ENCODE measurements at regions of chr1 and their contacts with region 1.

Region 1: GRCh38 chr1:181142096-181142958 is 53.8 kb downstream of the IER5 start:
- DNase-seq: peak; percentile 81
- H3K4me3 ChIP-seq: peak overlapping the region; percentile 36
- H3K27ac ChIP-seq: peak overlapping the region; percentile 43
- H3K27me3 ChIP-seq: peaks cover 6% of the 10 kb centered on the region
- CTCF ChIP-seq: peak; percentile 97

Region 2: GRCh38 chr1:180881806-180882509 is 260.4 kb before region 1 on chr1:
- CTCF ChIA-PET with region 1: interaction called, 55 read pairs
- POLR2A ChIA-PET with region 1: no interaction called
- DNase-seq: no peak
- H3K4me3 ChIP-seq: no peak overlapping the region
- H3K27ac ChIP-seq: no peak overlapping the region
- H3K27me3 ChIP-seq: no peaks in the 10 kb centered on the region
- CTCF ChIP-seq: peak; percentile 60

Region 3: DNA sequence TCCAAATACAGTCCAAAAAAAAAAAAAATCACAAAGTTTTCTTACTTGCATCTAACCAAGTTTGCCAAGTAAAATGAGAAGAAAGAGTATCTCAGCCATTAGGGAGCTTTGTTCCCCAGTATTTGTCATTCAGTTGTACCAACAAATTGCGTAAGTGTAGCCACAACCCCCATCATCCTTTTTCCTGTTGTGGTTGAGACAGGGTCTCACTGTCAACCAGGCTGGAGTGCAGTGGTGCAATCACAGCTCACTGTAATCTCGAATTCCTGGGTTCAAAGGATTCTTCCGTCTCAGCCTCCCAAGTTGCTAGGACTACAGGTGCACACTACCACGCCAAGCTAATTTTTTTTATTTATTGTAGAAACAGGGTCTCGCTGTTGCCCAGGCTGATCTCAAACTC is 129.2 kb before region 1 on chr1:
- CTCF ChIA-PET with region 1: interaction called, 12 read pairs
- POLR2A ChIA-PET with region 1: no interaction called
- DNase-seq: no peak
- H3K4me3 ChIP-seq: no peak overlapping the region
- H3K27ac ChIP-seq: no peak overlapping the region
- H3K27me3 ChIP-seq: no peaks in the 10 kb centered on the region
- CTCF ChIP-seq: no peak

Region 4: GRCh38 chr1:181033799-181034451 is 108.4 kb before region 1 on chr1 and contains the start of gene MR1:
- CTCF ChIA-PET with region 1: interaction called, 54 read pairs
- POLR2A ChIA-PET with region 1: no interaction called
- DNase-seq: peak; percentile 38
- H3K4me3 ChIP-seq: peak within 1 kb of the TSS; percentile 51
- H3K27ac ChIP-seq: peak within 1 kb of the TSS; percentile 76
- H3K27me3 ChIP-seq: no peaks in the 10 kb centered on the region
- CTCF ChIP-seq: no peak
- polyA plus RNA-seq, gene MR1: 16.7 and 17.2 TPM in 2 replicates

Region 5: GRCh38 chr1:181088079-181089016 is 54.0 kb before region 1 on chr1 and contains the start of gene IER5:
- CTCF ChIA-PET with region 1: interaction called, 54 read pairs
- POLR2A ChIA-PET with region 1: interaction called, 82 read pairs
- DNase-seq: peak; percentile 85
- H3K4me3 ChIP-seq: peak within 1 kb of the TSS; percentile 94
- H3K27ac ChIP-seq: peak within 1 kb of the TSS; percentile 71
- H3K27me3 ChIP-seq: no peaks in the 10 kb centered on the region
- CTCF ChIP-seq: no peak
- polyA plus RNA-seq, gene IER5: 20.4 and 20.7 TPM in 2 replicates

Region 6: DNA sequence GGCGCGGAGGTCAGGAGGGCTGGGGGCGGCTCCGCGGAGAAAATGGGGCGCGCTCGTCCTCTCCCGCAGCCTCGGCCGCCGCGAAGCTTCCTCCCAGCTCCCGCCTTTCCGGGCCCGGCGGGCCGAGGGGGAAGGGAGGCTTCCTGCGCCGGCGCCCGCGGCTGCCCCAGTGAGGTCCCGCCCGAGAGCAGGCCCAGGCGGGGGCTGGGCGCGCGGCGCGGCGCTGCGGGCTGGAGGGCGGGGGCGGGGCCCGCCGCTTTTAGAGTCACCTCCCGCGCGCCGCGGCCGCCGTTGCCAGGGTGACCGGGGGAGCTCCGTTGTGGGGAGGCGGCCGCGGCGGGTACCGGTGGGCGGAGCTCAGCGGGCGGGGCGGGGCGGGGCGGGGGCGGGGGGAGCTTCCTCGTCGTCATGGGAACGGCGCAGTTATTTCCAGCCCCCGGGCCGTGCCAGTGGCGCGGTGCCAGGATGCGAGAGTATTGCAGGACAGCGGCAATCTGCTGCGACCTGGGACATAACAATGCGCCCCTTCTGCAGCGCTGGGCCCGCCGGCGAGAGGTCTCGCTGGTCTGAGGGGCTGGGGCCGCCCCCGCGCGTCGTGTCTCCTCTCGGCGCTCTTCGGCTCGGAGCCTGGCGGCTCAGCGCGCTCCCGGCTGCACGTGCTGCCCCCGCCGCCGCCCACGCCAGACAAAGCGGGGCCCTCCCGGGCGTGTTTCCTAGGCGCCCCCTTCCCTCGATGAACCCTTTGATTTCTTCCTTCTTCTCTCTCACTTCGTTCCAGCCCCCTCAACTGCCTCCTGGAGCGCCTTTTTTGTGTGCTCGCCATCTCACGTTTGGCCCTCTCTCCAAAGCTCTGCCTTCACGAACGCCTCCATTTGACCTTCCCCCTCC is 36.9 kb before region 1 on chr1:
- CTCF ChIA-PET with region 1: interaction called, 29 read pairs
- POLR2A ChIA-PET with region 1: interaction called, 20 read pairs
- DNase-seq: peak; percentile 61
- H3K4me3 ChIP-seq: peak overlapping the region; percentile 70
- H3K27ac ChIP-seq: peak overlapping the region; percentile 68
- H3K27me3 ChIP-seq: no peaks in the 10 kb centered on the region
- CTCF ChIP-seq: no peak

Region 7: DNA sequence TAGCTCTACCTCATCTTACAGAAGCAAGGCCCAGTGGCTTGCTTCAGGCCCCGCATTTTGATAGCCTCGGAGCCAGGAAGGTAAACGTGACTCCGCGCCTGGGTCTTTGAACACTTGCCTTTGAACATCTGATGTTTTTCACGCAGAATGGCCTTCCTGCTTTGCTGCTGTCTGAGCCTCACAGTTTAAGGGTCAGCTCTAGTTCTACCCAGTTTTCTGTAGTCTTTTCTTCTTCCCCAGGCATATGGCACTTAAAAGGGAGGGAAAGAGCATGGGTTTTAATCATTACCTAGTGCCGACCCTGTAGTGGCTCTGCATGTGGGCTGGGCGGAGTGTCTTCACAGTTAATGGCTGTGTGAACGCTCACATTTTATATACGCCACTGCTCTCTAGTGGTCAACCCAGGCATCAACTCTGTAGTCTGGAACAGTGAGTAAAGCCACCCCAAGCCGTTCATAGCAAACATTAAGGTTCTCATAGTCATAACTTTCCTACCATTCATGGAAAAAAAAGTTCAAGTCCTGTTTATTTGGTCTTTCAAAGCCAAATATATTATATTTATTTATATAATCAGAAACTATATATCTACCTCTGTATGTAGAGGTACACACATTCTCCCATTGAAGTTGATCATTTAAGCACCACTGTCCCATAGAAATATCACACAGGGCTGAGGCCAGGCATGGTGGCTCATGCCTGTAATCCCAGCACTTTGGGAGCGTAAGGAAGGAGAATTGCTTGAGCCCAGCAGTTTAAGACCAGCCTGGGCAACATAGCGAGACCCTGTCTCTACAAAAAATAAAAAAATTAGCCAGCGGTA is 24.3 kb after region 1 on chr1:
- CTCF ChIA-PET with region 1: interaction called, 26 read pairs
- POLR2A ChIA-PET with region 1: no interaction called
- DNase-seq: peak; percentile 34
- H3K4me3 ChIP-seq: no peak overlapping the region
- H3K27ac ChIP-seq: no peak overlapping the region
- H3K27me3 ChIP-seq: peaks cover 2% of the 10 kb centered on the region
- CTCF ChIP-seq: peak; percentile 93

Region 8: GRCh38 chr1:181335629-181336028 is 193.3 kb after region 1 on chr1:
- CTCF ChIA-PET with region 1: no interaction called
- POLR2A ChIA-PET with region 1: no interaction called
- DNase-seq: no peak
- H3K4me3 ChIP-seq: no peak overlapping the region
- H3K27ac ChIP-seq: no peak overlapping the region
- H3K27me3 ChIP-seq: no peaks in the 10 kb centered on the region
- CTCF ChIP-seq: no peak